ENCODE measurements at regions of chr15 and their contacts with region 1.

Region 1: DNA sequence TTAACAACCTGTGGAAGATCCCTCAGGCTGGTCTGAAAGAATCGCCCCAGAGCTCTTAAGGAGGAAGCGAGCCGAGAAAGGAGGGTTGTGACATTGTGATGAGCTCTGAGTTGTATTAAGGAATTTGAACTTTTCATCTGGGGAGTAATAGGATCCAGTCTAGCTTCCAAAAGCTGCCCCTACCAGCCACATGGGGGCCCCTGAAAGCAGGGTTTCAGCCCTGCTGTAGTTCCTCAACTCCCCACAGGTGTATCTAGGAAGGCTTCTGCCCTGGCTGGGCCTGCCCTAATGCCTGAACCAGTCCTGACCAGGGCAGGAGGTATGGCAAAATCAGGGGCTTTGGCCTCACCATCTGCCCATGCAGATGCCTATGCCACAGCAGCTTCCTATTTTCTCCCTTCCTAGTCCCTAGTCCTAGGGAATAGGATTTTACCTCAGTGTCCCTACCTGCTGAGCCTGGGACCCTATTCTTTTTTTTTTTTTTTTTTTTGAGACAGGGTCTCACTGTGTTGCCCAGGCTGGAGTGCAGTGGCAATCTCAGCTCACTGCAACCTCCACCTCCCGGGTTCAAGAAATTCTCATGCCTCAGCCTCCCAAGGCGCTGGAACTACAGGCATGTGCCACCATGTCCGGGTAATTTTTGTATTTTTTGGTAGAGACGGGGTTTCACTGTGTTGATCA is 5.0 kb upstream of the AP3S2 start:
- DNase-seq: peak; percentile 67 to 81 (median 79)
- H3K4me3 ChIP-seq: no peak overlapping the region
- H3K27ac ChIP-seq: no peak overlapping the region
- H3K4me1 ChIP-seq: peaks cover 0 to 9% (median 6%) of the 10 kb centered on the region in 4 experiments
- H3K27me3 ChIP-seq: no peaks in the 10 kb centered on the region

Region 2: DNA sequence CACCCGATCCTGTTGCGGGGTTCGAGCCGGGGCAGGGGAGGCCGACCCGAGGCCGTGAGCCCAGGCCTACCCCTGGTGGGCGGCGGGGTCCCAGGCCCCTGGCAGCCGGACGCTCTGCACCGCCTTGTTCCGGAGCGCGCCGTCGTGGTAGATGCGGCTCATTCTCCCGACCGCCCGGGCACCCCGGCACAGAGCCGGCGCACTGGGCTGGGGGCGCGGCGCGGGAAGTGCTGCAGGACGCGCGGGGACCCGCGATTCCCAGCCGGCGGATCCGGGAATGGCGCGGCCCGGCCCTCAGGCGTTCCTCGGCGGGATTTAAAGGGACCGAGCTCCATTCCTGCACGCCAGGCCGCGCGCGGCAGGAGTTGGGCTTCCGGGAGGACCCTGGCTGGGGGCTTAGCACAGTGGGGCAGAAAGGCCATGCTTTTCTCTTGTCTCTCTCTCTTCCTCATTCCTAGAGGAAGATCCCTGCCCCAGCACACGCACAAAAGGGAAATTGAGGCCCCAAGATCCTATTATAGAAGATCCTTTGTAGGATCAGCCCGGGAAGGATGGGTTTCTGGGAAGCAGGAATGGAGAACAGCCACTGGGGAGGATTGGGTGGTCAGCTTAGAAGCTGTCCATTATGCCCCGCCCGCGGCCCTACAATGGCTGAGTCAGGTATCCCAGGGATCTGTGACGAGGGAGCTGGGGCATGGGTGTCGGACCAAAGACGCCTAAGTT is 14.1 kb after region 1 on chr15 and contains the start of gene ARPIN:
- CTCF ChIA-PET with region 1: interaction called, 27 read pairs
- POLR2A ChIA-PET with region 1: no interaction called
- DNase-seq: peak in 2 of 3 donors; percentile 27 to 47
- H3K4me3 ChIP-seq: peak within 1 kb of the TSS; percentile 29 to 79 (median 57)
- H3K27ac ChIP-seq: no peak within 1 kb of the TSS
- H3K4me1 ChIP-seq: peaks cover 3 to 14% (median 10%) of the 10 kb centered on the region in 4 experiments
- H3K27me3 ChIP-seq: peaks cover 0 to 2% (median 0%) of the 10 kb centered on the region in 5 experiments

Region 3: GRCh38 chr15:90080818-90081385 is 182.1 kb after region 1 on chr15:
- CTCF ChIA-PET with region 1: interaction called, 11 read pairs
- POLR2A ChIA-PET with region 1: no interaction called
- DNase-seq: no peak
- H3K4me3 ChIP-seq: no peak overlapping the region
- H3K27ac ChIP-seq: no peak overlapping the region
- H3K4me1 ChIP-seq: peaks cover 0 to 23% (median 10%) of the 10 kb centered on the region in 4 experiments
- H3K27me3 ChIP-seq: no peaks in the 10 kb centered on the region

Measured in common myeloid progenitor, CD34-positive (primary cell).